ENCODE measurements at regions of chr11 and their contacts with region 1.

Region 1: GRCh38 chr11:89660234-89660633 is 49.9 kb upstream of the TRIM77 start:
- DNase-seq: no peak
- H3K4me3 ChIP-seq: no peak overlapping the region
- H3K27ac ChIP-seq: no peak overlapping the region
- H3K4me1 ChIP-seq: no peaks in the 10 kb centered on the region
- H3K27me3 ChIP-seq: no peaks in the 10 kb centered on the region
- CTCF ChIP-seq: no peak

Region 2: DNA sequence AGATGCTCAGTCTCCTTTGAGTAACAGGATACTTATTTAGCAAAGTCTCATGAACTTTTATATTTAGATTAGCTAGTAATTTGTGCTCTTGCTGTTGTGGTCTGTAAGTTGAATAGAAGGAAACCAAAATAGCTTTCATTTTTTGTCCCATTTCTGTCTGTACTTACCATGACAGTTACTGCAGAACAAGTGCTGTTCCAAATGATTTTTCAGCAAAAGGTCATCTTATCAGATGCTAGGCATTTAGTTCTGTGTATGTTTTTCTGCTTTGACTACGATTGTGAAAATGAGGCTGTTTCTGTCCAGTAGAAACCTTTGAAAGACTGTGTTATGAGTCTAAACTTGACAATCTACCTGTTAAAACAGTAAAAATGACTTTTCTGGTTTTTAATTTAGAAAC is 115.3 kb before region 1 on chr11:
- CTCF ChIA-PET with region 1: no interaction called
- dilution Hi-C with region 1: no loop called
- in situ Hi-C with region 1: no loop called
- intact Hi-C with region 1: no loop called
- DNase-seq: no peak
- H3K4me3 ChIP-seq: no peak overlapping the region
- H3K27ac ChIP-seq: no peak overlapping the region
- H3K4me1 ChIP-seq: no peaks in the 10 kb centered on the region
- H3K27me3 ChIP-seq: no peaks in the 10 kb centered on the region
- CTCF ChIP-seq: no peak

Region 3: GRCh38 chr11:90113541-90113940 is 453.3 kb after region 1 on chr11:
- CTCF ChIA-PET with region 1: no interaction called
- dilution Hi-C with region 1: no loop called
- in situ Hi-C with region 1: loop called in 1 of 2 experiments (anchors 25 kb)
- intact Hi-C with region 1: no loop called
- DNase-seq: no peak
- H3K4me3 ChIP-seq: no peak overlapping the region
- H3K27ac ChIP-seq: no peak overlapping the region
- H3K4me1 ChIP-seq: no peaks in the 10 kb centered on the region
- H3K27me3 ChIP-seq: no peaks in the 10 kb centered on the region
- CTCF ChIP-seq: peak; percentile 13 to 40